ENCODE measurements at regions of chr3 and their contacts with region 1.

Region 1: DNA sequence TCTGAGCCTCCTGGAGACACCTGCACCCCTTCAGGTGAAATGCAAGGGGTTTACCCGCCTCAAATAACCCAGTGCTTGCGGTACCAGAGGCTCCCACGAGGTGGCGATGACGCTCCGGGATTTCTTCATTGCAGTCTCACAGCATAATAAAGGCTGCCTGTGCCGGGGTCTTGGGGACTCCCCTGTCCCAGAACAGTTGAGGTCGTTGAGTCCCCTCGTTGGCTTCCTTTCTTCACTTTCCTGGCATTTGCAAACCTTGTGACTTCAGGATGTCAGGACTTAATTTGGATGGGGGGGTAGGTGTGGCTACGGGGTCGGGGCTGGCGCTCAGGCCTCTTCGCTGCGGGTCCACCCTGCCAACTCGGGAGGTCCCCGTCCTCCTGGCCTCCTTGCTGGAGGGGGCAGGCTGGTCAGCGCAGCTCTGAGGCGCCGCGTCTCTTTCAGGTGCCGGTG is 1.3 kb downstream of the GNAT1 start:
- DNase-seq: peak; percentile 47
- ATAC-seq: peak; percentile 49; the same call in 1 of the 2 replicates
- H3K4me3 ChIP-seq: no peak overlapping the region
- H3K27ac ChIP-seq: no peak overlapping the region
- H3K4me1 ChIP-seq: peaks cover 28% of the 10 kb centered on the region
- H3K27me3 ChIP-seq: no peaks in the 10 kb centered on the region
- CTCF ChIP-seq: peak; percentile 89

Region 2: DNA sequence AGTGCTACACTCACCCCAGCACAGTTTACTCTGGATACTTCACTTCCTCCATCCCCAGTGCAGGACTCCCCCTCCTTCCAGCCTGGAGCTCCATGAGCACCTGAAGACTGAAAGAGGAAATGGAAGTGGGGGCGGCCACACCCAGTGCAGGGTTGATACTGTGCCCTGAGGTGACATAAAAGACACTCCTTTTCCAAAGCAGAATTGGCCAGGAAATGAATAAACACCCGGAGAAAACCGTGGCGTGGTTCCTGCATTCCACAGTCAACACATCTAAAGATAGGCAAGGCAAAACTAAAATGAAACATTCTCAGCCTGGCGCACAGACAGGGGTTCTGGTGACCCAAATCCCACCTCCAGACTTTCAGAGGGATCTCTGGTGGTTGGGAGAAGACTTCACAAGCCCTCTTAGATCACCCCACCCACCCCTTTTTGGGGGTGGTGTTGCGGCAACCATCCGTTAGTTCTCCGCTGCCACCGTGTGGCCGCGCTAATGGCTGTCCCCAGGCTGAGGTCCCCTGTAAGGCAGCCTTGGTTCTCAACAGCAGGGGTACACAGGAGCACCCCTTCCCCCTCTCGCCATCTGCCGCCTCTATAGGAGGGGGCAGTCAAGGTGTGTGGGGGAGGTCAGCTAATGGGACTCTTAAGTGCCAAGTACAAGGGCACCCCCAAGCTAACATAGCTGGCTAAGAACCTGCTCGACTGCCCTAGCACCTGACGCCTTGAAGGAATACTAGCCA is 286.5 kb before region 1 on chr3:
- CTCF ChIA-PET with region 1: no interaction called
- POLR2A ChIA-PET with region 1: no interaction called
- in situ Hi-C with region 1: no loop called
- intact Hi-C with region 1: no loop called
- DNase-seq: no peak
- ATAC-seq: peak; percentile 65
- H3K4me3 ChIP-seq: peak overlapping the region in 1 of 2 experiments; percentile 49; a peak in 2 of 4 replicates
- H3K27ac ChIP-seq: peak overlapping the region; percentile 72
- H3K4me1 ChIP-seq: peaks cover 22% of the 10 kb centered on the region
- H3K27me3 ChIP-seq: no peaks in the 10 kb centered on the region
- CTCF ChIP-seq: peak; percentile 86

Region 3: GRCh38 chr3:50121416-50122032 is 71.2 kb before region 1 on chr3:
- CTCF ChIA-PET with region 1: no interaction called
- POLR2A ChIA-PET with region 1: no interaction called
- in situ Hi-C with region 1: no loop called
- intact Hi-C with region 1: loop called (anchors 1 kb)
- DNase-seq: peak; percentile 32
- ATAC-seq: peak; percentile 86
- H3K4me3 ChIP-seq: no peak overlapping the region
- H3K27ac ChIP-seq: peak overlapping the region; percentile 34; the same call in 1 of the 2 replicates
- H3K4me1 ChIP-seq: peaks cover 31% of the 10 kb centered on the region
- H3K27me3 ChIP-seq: no peaks in the 10 kb centered on the region
- CTCF ChIP-seq: peak; percentile 80

Region 4: DNA sequence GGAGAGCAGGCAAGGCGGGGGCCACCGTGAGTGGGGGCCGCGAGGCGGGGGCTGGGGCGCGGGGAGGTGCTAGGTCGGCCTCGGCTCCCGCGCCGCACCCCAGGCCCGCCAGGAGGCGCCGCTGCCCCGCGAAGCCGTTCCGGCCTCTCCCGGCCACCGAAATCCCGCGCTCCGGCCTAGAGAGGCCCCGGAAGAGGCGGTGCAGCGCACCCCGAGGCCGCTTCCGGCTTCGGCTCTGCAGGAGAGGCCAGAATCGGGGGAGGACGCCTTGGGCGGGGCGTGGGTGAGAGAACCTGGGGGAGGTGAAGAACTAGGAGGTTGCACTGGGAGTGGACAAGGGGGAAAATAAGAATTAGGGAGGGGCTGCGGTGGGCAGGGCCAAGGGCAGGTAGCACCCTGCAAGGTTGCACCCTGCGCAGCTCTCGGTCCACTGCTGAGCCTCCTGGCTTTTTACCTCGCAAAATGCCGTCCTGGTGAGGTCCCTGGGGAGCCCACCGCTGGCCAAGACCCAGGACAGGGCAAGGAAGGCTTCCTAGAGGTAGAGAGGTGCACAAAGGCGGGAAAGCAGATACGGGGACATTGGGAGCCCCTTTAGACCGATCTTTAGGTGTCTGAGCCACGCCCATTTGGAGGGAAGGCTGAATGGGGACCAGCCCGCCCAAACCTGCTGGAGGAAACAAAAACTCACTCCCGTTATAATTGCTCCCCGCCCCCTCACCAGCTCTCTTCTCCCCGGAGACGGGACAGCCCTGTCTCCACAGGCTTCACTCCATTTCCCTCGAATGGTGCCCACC is 34.9 kb after region 1 on chr3:
- CTCF ChIA-PET with region 1: interaction called, 39 read pairs
- POLR2A ChIA-PET with region 1: no interaction called
- in situ Hi-C with region 1: no loop called
- intact Hi-C with region 1: loop called (anchors 1 kb)
- DNase-seq: no peak
- ATAC-seq: peak; percentile 93
- H3K4me3 ChIP-seq: peak overlapping the region; percentile 69 to 81
- H3K27ac ChIP-seq: peak overlapping the region; percentile 87
- H3K4me1 ChIP-seq: no peaks in the 10 kb centered on the region; the same call in 1 of the 2 replicates
- H3K27me3 ChIP-seq: no peaks in the 10 kb centered on the region
- CTCF ChIP-seq: peak; percentile 95

Region 5: GRCh38 chr3:50237754-50238548 is 45.2 kb after region 1 on chr3:
- CTCF ChIA-PET with region 1: interaction called, 4 read pairs
- POLR2A ChIA-PET with region 1: interaction called, 15 read pairs
- in situ Hi-C with region 1: no loop called
- intact Hi-C with region 1: no loop called
- DNase-seq: no peak
- ATAC-seq: peak; percentile 54
- H3K4me3 ChIP-seq: peak overlapping the region; percentile 83 to 86
- H3K27ac ChIP-seq: peak overlapping the region; percentile 83
- H3K4me1 ChIP-seq: peaks cover 27% of the 10 kb centered on the region
- H3K27me3 ChIP-seq: no peaks in the 10 kb centered on the region
- CTCF ChIP-seq: no peak

Region 6: DNA sequence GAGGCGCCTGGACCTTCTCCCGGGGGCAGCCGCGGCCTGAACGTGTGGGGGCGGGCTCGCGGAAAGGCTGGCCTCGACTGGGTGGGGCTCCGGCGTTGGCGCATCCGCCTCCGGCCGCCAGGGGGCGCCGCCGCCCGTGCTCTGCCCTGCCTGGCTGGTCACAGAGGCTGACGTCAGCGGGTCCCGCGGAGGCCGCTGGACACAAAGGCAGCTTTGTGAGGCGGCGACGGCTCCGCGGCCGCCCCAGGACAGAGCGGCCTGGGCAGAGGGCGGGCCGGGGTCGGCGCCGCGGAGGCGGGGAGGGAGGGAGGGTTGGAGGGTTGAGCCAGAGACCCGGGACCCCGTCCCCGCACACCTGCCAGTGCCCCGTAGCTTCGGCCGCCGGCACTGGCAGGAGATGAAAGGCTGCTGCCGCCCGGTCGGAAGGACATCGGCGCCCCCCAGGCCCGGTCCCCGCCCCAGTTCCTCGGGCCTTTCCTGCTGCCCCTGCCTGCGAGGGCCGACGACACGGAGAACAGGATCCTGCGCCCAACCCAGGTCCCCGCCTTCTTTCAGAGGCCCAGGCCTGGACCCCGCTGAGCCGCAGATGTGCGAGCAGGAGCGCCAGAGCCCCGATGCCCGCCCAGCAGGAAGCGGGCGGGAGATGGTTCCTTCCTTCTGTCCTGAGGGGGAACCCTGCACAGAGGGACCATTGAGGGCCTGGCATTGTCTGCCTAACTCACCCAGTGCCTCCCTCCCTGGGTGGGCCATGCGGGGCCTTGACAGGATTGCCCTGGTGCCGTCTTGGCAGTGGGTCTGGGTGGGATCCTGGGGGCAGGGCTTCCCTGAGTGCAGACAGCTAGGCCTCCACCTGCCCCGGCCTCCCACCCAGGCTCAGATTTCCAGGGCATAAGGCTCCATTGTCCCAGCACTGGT is 67.6 kb after region 1 on chr3:
- CTCF ChIA-PET with region 1: interaction called, 3 read pairs
- POLR2A ChIA-PET with region 1: no interaction called
- in situ Hi-C with region 1: no loop called
- intact Hi-C with region 1: loop called (anchors 10 kb)
- DNase-seq: no peak
- ATAC-seq: peak; percentile 94
- H3K4me3 ChIP-seq: peak overlapping the region; percentile 39 to 51
- H3K27ac ChIP-seq: peak overlapping the region; percentile 72
- H3K4me1 ChIP-seq: peaks cover 9% of the 10 kb centered on the region
- H3K27me3 ChIP-seq: no peaks in the 10 kb centered on the region
- CTCF ChIP-seq: peak; percentile 97

Measured in Panc1 (cell line).